ENCODE measurements at regions of chr14 and their contacts with region 1.

Region 1: DNA sequence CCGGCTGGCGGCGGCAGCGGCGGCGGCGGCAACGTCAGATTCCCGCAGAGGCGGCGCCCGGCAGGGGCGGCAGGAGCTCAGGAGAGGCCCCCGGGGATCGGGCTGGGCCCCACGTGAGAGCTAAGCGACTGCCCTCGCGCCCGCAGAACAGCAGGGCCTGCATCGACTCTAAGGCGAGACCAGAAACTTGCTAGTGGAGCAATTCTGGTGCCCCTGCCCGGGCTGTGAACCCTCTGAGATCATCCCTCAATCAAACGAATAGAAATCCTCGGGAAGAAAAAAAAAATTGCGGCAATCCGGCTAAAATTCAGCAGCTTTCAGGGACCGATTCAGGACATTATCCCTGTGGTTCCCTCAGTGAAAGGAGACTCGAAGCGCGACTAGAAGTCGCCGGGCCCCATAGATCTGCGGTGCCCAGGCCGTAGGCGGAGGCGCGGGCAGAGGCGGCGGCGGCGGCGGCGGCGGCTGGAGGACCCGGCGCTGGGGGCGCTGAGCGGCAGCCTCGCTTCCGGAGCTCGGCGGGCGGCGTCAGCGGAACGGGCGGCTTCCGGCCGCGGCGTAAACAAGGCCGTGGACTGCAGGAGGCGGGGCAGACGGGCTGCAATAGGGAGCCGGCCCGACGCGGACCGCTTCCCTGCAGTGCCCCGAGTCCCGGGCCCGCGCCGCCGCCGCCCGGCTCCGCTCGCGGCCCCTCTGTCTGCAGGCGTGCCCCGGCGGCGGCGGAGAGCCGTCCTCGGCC is at the start of gene KLHDC2:
- DNase-seq: peak; percentile 88
- H3K4me3 ChIP-seq: peak within 1 kb of the TSS; percentile 68 to 86 (median 75)
- H3K27ac ChIP-seq: peak within 1 kb of the TSS; percentile 86
- H3K4me1 ChIP-seq: peaks cover 16% of the 10 kb centered on the region
- H3K27me3 ChIP-seq: no peaks in the 10 kb centered on the region
- CTCF ChIP-seq: peak in 1 of 2 donors; percentile 34
- POLR2A ChIP-seq: peak; percentile 81
- total RNA-seq, gene KLHDC2: 29.2 and 30.2 TPM in 2 replicates

Region 2: GRCh38 chr14:49620182-49621113 is 147.3 kb before region 1 on chr14 and contains the starts of genes MGAT2 and RPL36AL:
- CTCF ChIA-PET with region 1: interaction called, 8 read pairs
- POLR2A ChIA-PET with region 1: interaction called, 11 read pairs
- dilution Hi-C with region 1: no loop called
- intact Hi-C with region 1: no loop called
- DNase-seq: peak; percentile 99
- H3K4me3 ChIP-seq: peak within 1 kb of the TSS; percentile 59 to 95 (median 83)
- H3K27ac ChIP-seq: peak within 1 kb of the TSS; percentile 85
- H3K4me1 ChIP-seq: peaks cover 40% of the 10 kb centered on the region
- H3K27me3 ChIP-seq: no peaks in the 10 kb centered on the region
- CTCF ChIP-seq: peak; percentile 8 to 51
- POLR2A ChIP-seq: peak; percentile 94
- total RNA-seq, gene MGAT2: 68.1 and 72.6 TPM in 2 replicates
- total RNA-seq, gene RPL36AL: 251 and 260 TPM in 2 replicates

Region 3: DNA sequence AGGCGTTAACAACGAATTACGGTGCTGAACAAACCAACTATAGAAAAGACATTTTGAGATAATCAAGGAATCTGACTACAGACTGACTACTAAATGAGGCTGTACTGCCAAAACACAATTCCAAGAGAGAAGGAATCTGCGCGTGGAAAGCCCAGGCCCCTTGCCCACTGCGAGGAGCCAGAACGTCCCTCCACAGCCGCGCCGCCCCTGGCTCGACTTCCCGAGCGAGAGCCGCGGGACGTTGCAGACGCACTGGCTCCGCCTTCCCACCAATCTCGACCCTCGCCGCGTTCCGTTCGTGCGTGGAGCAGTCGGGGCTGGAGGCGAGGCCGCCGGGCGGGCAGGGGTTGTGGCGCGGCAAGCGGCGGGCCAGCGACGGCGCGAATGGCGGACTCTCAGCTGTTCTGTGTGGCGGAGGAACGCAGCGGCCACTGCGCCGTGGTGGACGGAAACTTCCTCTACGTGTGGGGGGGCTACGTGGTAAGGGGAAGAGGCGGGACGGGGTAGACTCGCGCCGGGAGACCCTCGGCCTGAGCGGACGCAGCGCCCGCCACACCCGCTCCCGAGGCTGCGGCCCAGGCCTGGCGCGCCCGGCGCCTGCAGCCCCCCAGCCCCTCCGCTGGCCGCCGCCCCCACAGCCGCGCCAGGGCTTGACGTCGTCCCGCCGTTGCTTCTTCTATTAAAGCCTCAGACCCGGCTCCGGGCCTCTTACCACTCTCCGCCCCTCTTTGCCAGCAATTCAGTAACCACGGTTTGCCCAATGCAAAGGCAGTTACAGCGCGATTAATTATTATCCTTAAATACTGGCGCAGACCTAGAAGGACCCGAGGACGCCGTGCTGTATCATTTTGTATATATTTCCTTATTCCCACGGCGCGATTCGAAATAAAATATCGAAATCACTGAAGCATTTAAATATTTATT is 74.7 kb before region 1 on chr14 and contains the start of gene KLHDC1:
- CTCF ChIA-PET with region 1: interaction called, 4 read pairs
- POLR2A ChIA-PET with region 1: interaction called, 3 read pairs
- dilution Hi-C with region 1: no loop called
- intact Hi-C with region 1: loop called (anchors 2 kb)
- DNase-seq: peak; percentile 85
- H3K4me3 ChIP-seq: peak within 1 kb of the TSS; percentile 48 to 91 (median 72)
- H3K27ac ChIP-seq: peak within 1 kb of the TSS; percentile 10
- H3K4me1 ChIP-seq: peaks cover 9% of the 10 kb centered on the region
- H3K27me3 ChIP-seq: no peaks in the 10 kb centered on the region
- CTCF ChIP-seq: no peak
- POLR2A ChIP-seq: peak; percentile 95
- total RNA-seq, gene KLHDC1: 1.2 and 1.6 TPM in 2 replicates

Region 4: GRCh38 chr14:49828640-49829039 is 60.9 kb after region 1 on chr14:
- CTCF ChIA-PET with region 1: no interaction called
- POLR2A ChIA-PET with region 1: no interaction called
- dilution Hi-C with region 1: no loop called
- intact Hi-C with region 1: no loop called
- DNase-seq: no peak
- H3K4me3 ChIP-seq: no peak overlapping the region
- H3K27ac ChIP-seq: no peak overlapping the region
- H3K4me1 ChIP-seq: no peaks in the 10 kb centered on the region
- H3K27me3 ChIP-seq: no peaks in the 10 kb centered on the region
- CTCF ChIP-seq: no peak
- POLR2A ChIP-seq: no peak

Region 5: DNA sequence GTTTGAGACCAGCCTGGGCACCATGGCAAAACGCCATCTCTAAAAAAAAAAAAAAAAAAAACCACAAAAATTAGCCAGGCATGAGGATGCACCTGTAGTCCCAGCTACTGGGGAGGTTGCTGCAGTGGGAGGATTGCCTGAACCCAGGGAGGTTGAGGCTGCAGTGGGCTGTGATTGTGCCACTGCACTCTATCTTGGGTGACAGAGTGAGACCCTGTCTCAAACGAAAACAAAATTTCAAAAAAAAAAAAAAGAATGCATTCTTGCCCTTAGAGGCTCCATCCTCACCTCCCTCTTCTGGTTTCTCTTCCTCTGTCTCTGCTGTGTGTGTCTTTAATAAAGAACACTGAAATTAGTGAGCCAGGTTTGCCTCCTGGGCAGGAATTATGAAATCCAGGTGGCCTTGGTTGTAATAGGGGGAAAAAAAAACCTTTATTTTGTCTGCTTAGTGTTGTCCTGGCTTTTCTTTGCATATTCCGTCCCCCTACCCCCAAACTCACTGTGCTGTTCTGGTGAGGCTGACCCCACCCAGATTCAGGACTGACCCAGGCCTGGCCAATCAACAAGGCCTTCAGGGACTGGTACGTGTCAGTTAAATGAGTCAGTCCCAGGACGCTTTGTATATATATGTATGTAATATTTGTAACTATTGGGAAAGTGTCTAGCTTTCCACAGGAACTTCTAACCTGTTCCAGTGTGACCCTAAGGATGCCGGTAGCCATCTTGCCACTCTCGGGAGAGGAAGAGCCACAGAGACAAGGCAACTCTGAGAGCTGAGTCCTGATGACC is 241.0 kb after region 1 on chr14:
- CTCF ChIA-PET with region 1: no interaction called
- POLR2A ChIA-PET with region 1: no interaction called
- dilution Hi-C with region 1: no loop called
- intact Hi-C with region 1: no loop called
- DNase-seq: no peak
- H3K4me3 ChIP-seq: no peak overlapping the region
- H3K27ac ChIP-seq: no peak overlapping the region
- H3K4me1 ChIP-seq: peaks cover 2% of the 10 kb centered on the region
- H3K27me3 ChIP-seq: peaks cover 0 to under 1% of the 10 kb centered on the region in 2 experiments
- CTCF ChIP-seq: no peak
- POLR2A ChIP-seq: no peak

Measured in endothelial cell of umbilical vein (primary cell).